ENCODE measurements at regions of chr1 and their contacts with region 1.

Region 1: GRCh38 chr1:150621497-150622302 is 7.7 kb downstream of the ENSA start:
- DNase-seq: no peak
- H3K4me3 ChIP-seq: no peak overlapping the region
- H3K27ac ChIP-seq: peak overlapping the region; percentile 30
- H3K4me1 ChIP-seq: peaks cover 62% of the 10 kb centered on the region
- H3K27me3 ChIP-seq: no peaks in the 10 kb centered on the region
- CTCF ChIP-seq: peak; percentile 60 to 65

Region 2: DNA sequence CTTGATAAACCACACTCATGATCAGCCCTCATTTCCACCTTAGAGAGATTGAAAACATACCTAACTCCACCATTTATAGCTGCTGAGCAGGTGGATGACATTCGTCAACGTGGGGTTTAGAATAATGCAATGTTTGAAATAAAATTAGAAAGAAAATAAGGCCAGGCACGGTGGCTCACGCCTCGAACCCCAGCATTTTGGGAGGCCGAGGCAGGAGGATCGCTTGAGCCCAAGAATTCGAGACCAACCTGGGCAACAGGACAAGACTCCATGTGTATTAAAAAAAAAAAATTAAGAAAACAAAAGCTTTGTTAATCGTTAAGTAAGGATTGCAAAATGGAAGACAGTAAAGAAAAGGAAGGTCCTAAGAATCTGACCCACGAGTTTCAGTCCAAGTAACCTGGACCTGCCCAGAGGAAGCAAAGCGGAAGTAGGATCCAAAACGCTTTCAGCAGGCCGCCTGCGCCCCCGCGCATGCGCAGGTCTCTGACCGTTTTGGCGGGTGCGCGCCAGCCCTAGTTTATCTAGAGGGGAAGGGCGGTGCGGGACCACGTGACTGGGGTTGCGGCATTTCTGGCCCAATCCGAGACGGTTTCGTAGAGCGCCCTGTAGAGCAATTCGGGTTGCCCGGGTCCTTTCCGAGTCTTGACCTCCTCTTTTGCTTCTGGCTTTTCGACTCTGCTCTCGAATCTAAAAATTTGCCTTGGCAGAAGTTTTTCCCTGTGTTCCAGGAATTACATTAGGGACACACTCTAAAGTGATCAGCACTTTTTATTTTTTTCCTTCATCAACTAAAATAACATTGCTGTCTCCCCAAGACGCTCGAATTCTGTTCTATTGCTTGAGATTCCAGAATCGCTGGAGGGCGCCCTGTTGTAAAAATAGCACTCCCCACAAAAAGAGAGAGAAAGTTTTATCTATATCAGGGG is 408.3 kb before region 1 on chr1:
- CTCF ChIA-PET with region 1: no interaction called
- dilution Hi-C with region 1: no loop called
- in situ Hi-C with region 1: no loop called
- intact Hi-C with region 1: no loop called
- DNase-seq: peak; percentile 79
- H3K4me3 ChIP-seq: peak overlapping the region; percentile 40 to 47 (median 41)
- H3K27ac ChIP-seq: peak overlapping the region; percentile 68
- H3K4me1 ChIP-seq: no peaks in the 10 kb centered on the region
- H3K27me3 ChIP-seq: no peaks in the 10 kb centered on the region
- CTCF ChIP-seq: peak; percentile 14 to 41

Region 3: DNA sequence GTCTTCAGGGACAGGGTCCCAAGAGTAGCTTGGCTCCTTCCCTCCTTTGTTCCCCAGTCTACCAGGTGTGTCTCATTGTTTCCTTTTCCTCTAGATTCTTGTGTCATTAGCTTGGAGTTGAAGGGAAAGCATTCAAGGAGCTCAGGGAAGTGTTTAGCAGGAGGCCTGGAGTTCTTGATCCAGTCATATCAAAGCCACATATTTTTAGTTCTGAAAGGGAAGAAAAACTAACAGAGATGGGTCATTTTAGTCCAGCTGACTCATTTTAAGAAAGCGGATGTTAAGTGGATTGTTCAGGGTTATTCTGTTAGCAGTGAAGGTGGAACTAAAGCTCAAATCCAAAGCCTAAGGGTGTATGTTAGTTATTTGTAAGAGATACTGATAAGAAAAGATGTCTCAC is 348.4 kb before region 1 on chr1:
- CTCF ChIA-PET with region 1: no interaction called
- dilution Hi-C with region 1: no loop called
- in situ Hi-C with region 1: no loop called
- intact Hi-C with region 1: no loop called
- DNase-seq: no peak
- H3K4me3 ChIP-seq: no peak overlapping the region
- H3K27ac ChIP-seq: no peak overlapping the region
- H3K4me1 ChIP-seq: no peaks in the 10 kb centered on the region
- H3K27me3 ChIP-seq: no peaks in the 10 kb centered on the region
- CTCF ChIP-seq: no peak

Region 4: DNA sequence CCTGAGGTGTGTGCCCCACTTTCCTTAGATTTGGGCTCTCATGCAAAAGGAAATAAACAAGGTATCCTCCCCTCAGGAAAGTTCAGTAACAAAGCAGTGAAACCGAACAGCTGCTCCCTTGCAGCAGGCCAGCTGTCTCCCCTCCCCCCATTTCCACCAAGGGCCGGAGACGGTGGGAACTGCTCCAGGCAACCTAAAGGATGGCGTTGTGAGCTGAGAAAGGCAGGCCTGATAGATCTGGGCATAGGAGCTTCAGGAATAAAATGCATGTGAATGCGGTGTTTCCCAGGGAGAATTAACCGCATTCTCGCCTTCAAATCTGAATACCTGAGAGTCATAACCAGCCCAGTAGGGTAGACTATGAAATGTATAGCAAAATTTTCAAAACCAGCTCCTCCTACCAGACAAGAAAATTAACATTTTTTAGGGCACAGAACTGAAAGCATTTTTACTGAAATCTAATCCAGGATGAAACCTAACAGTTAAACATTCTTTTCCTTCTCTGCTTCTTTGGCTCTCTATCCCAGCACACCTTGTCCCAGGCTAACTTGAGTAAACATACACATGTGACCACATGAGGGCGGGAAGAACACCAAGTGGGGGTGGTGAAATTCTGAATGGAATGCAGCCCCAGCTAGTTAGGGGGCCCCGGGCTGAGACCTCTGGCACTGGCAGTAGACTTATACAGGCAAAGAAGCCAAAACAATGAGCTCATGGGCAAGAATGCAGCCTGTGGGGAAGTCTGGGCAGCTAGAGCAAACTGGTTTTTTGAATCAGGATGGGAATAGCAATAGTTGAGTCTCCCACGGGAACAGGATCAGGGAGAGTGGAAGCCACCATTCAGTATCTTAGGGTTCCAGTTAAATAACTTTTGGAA is 53.7 kb before region 1 on chr1:
- CTCF ChIA-PET with region 1: no interaction called
- dilution Hi-C with region 1: loop called (anchors 5 kb)
- in situ Hi-C with region 1: loop called in 1 of 2 experiments (anchors 5 kb)
- intact Hi-C with region 1: loop called (anchors 2 kb)
- DNase-seq: peak; percentile 97
- H3K4me3 ChIP-seq: peak overlapping the region in 1 of 3 experiments; percentile 0
- H3K27ac ChIP-seq: peak overlapping the region; percentile 88
- H3K4me1 ChIP-seq: peaks cover 69% of the 10 kb centered on the region
- H3K27me3 ChIP-seq: no peaks in the 10 kb centered on the region
- CTCF ChIP-seq: no peak